ENCODE measurements at regions of chr18 and their contacts with region 1.

Region 1: DNA sequence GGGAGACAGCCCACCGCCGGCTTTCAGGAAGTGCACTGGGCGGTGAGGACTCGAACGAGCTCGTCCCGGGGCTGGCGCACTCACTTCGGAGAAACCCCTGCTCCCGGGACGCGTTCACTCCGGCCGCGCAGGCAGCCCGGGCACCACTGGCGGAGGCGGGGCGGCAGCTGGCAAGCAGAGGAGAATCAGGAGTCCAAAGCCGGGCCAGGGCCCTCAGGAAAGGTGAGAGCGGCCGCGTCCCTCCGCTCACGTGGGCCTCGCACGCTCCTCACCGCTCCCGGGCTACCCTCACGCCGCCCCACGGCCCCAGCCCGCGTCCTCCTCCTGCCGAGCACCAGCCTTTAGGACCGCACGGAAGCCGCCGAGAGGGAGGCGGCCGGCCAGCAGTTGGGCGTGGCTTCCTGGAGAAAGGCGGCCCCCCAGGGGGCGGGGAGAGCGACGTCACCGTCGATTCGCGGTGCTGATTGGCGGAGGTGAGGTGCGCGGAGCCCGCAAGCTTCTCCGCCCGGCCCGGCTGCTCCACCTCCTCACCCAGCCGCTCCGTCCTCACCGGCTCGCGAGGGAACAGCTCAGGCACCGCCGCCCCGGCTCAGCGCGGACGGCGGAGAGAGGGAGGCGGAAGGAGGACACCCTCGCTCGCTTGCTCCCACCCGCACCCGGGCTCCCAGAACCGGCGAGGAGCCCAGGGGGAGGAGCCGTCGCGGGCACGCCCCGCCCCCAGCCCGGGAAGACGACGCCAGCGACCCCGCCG is at the start of gene ZCCHC2:
- DNase-seq: peak; percentile 90 to 98
- H3K4me3 ChIP-seq: peak within 1 kb of the TSS; percentile 95 to 96
- H3K27ac ChIP-seq: peak within 1 kb of the TSS; percentile 96 to 99
- H3K4me1 ChIP-seq: peaks cover 5 to 18% of the 10 kb centered on the region in 2 donors
- H3K27me3 ChIP-seq: no peaks in the 10 kb centered on the region
- CTCF ChIP-seq: no peak
- total RNA-seq, gene ZCCHC2: 22.9 TPM

Region 2: GRCh38 chr18:61738488-61738887 is 784.2 kb before region 1 on chr18:
- intact Hi-C with region 1: loop called (anchors 5 kb)
- DNase-seq: peak in 1 of 2 donors; percentile 79
- H3K4me3 ChIP-seq: no peak overlapping the region
- H3K27ac ChIP-seq: peak overlapping the region; percentile 76 to 89
- H3K4me1 ChIP-seq: peaks cover 15 to 36% of the 10 kb centered on the region in 2 donors
- H3K27me3 ChIP-seq: no peaks in the 10 kb centered on the region
- CTCF ChIP-seq: no peak

Region 3: GRCh38 chr18:62009521-62009920 is 513.2 kb before region 1 on chr18:
- intact Hi-C with region 1: no loop called
- DNase-seq: no peak
- H3K4me3 ChIP-seq: no peak overlapping the region
- H3K27ac ChIP-seq: no peak overlapping the region
- H3K4me1 ChIP-seq: no peaks in the 10 kb centered on the region
- H3K27me3 ChIP-seq: no peaks in the 10 kb centered on the region
- CTCF ChIP-seq: no peak

Region 4: DNA sequence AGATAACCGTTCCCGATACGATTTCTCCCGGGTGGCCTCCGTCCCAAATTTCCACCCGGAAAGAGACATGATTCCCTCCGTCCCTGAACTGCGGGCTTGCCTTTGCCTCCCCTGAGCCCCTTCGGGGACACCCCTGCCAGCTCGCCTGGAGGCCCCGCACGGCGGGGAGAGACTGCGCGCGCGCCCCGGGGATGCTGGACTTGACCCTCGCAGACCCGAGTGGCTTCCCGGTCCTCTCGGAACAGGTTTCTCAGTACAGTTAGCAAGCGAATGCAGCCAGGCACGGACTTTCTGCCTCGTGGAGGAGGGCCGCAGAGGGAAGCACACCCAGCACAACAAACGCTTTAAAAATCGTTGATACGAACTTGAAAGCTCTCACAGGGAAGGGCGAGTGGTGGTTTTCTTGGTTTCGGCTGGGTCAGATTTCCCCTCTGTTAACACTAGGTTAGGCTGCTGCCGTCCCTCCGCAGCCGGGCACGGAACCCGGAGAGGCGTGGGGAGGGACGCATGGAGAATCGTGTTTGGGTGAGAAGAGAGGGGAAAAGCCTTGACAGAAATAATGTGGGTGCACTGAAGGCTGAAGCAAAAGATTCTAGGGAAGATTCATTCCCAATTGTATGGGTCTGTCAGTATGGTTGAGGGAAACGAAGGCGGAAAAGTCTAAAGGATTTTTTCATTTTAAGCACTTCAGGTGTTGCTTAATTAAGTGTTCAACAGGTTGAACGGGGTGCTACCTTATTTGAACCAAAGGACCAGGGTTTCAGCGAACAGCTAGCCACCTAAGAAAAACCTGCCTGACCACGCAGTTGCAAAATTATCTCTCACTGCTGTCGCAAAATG is 196.7 kb before region 1 on chr18:
- intact Hi-C with region 1: loop called (anchors 2 kb)
- DNase-seq: no peak
- H3K4me3 ChIP-seq: peak overlapping the region; percentile 51 to 64
- H3K27ac ChIP-seq: no peak overlapping the region
- H3K4me1 ChIP-seq: peaks cover 6 to 26% of the 10 kb centered on the region in 2 donors
- H3K27me3 ChIP-seq: peaks cover 3% of the 10 kb centered on the region
- CTCF ChIP-seq: no peak

Region 5: GRCh38 chr18:62437235-62438017 is 85.3 kb before region 1 on chr18:
- intact Hi-C with region 1: loop called (anchors 1 kb)
- DNase-seq: peak; percentile 86 to 98
- H3K4me3 ChIP-seq: peak overlapping the region; percentile 39 to 52
- H3K27ac ChIP-seq: peak overlapping the region; percentile 85 to 94
- H3K4me1 ChIP-seq: peaks cover 4 to 19% of the 10 kb centered on the region in 2 donors
- H3K27me3 ChIP-seq: no peaks in the 10 kb centered on the region
- CTCF ChIP-seq: no peak

Region 6: DNA sequence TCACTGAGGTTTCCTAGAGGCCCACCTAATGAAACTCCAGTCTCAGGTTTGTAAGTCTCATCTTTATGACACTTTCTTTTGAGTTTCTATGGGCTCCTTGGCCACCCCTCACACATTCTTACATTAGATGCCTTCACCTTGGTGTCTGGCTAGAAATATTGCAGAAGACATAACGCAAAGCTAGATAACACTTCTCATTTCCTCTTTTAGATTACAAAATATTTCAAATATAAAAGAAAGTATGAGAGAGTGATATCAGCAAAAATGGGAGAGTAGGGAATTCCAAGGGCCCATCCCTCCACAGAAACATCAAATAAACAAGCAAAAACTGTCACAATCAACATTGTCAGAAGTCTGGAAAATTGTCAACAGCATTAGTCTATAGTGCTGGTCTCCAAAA is 43.1 kb before region 1 on chr18:
- intact Hi-C with region 1: no loop called
- DNase-seq: no peak
- H3K4me3 ChIP-seq: no peak overlapping the region
- H3K27ac ChIP-seq: no peak overlapping the region
- H3K4me1 ChIP-seq: no peaks in the 10 kb centered on the region
- H3K27me3 ChIP-seq: no peaks in the 10 kb centered on the region
- CTCF ChIP-seq: no peak

Region 7: GRCh38 chr18:62584241-62585120 is 61.8 kb after region 1 on chr18:
- intact Hi-C with region 1: loop called (anchors 5 kb)
- DNase-seq: peak; percentile 51 to 90
- H3K4me3 ChIP-seq: peak overlapping the region in 1 of 2 donors; percentile 42
- H3K27ac ChIP-seq: peak overlapping the region in 1 of 2 donors; percentile 59
- H3K4me1 ChIP-seq: peaks cover 0 to 4% of the 10 kb centered on the region in 2 donors
- H3K27me3 ChIP-seq: no peaks in the 10 kb centered on the region
- CTCF ChIP-seq: peak; percentile 92 to 95 (median 93)

Region 8: GRCh38 chr18:63422087-63422809 is 899.6 kb after region 1 on chr18 and contains the start of gene VPS4B:
- intact Hi-C with region 1: loop called (anchors 5 kb)
- DNase-seq: peak; percentile 97 to 100
- H3K4me3 ChIP-seq: peak within 1 kb of the TSS; percentile 94 to 99
- H3K27ac ChIP-seq: peak within 1 kb of the TSS; percentile 92 to 93
- H3K4me1 ChIP-seq: peaks cover 0 to 10% of the 10 kb centered on the region in 2 donors
- H3K27me3 ChIP-seq: no peaks in the 10 kb centered on the region
- CTCF ChIP-seq: no peak
- total RNA-seq, gene VPS4B: 16.7 TPM

Region 9: GRCh38 chr18:63619661-63620060 is 1097.0 kb after region 1 on chr18:
- intact Hi-C with region 1: no loop called
- DNase-seq: no peak
- H3K4me3 ChIP-seq: no peak overlapping the region
- H3K27ac ChIP-seq: no peak overlapping the region
- H3K4me1 ChIP-seq: no peaks in the 10 kb centered on the region
- H3K27me3 ChIP-seq: no peaks in the 10 kb centered on the region
- CTCF ChIP-seq: no peak

Region 10: DNA sequence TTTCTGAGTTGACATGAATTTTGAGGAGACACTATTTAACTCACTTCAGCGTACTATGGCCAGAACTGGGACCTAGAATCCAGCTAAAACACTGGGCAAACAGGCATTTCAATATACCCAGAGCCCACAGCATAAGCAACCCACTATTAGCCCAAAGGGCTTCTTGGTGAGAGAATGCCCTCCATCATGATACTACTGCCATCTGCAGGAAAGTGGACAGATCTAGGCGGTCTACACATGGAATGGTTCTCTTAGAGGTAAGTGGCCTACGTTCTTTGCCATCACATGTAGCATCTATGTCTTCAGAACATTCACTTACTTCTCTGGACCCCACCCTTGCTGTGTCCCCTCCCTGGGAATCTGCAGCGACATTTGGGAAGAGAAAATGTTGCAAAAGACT is 1807.5 kb after region 1 on chr18:
- intact Hi-C with region 1: no loop called
- DNase-seq: no peak
- H3K4me3 ChIP-seq: no peak overlapping the region
- H3K27ac ChIP-seq: no peak overlapping the region
- H3K4me1 ChIP-seq: no peaks in the 10 kb centered on the region
- H3K27me3 ChIP-seq: no peaks in the 10 kb centered on the region
- CTCF ChIP-seq: no peak